CD14-positive monocyte (primary cell): ENCODE measurements at regions of chr5 and their contacts with region 1.

Region 1: GRCh38 chr5:10635257-10635866 is 71.5 kb downstream of the ANKRD33B start:
- DNase-seq: peak; percentile 93 to 97 (median 97)
- H3K4me3 ChIP-seq: peak overlapping the region in 1 of 3 experiments; percentile 38
- H3K4me3 Mint-ChIP-seq: peak overlapping the region; percentile 7 to 57
- H3K27ac ChIP-seq: peak overlapping the region; percentile 38 to 98
- H3K27ac Mint-ChIP-seq: peak overlapping the region; percentile 81 to 99 (median 87)
- H3K4me1 ChIP-seq: peaks cover 54 to 58% of the 10 kb centered on the region in 2 donors
- H3K4me1 Mint-ChIP-seq: peaks cover 57% of the 10 kb centered on the region
- H3K27me3 ChIP-seq: no peaks in the 10 kb centered on the region
- H3K27me3 Mint-ChIP-seq: peaks cover 2 to 12% (median 2%) of the 10 kb centered on the region in 3 donors
- CTCF ChIP-seq: no peak

Region 2: DNA sequence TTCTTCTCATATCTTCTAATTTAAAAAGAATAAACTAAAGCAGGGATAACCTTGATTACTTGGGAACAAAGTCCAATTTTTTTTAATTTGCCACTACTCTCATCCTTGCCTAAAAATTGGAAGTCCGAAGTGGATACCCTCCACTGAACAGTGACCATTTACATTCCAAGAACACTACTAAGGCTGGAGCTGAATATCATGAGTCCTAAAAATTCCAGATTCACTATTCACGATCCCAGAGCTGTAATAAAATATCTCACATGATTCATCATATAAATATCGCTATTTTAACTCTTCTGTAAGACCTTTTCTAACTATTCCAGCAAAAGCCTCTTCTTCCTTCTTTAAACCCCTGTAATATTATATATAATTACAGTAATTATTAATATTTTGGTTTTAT is 443.1 kb before region 1 on chr5:
- intact Hi-C with region 1: no loop called
- DNase-seq: no peak
- H3K4me3 ChIP-seq: no peak overlapping the region
- H3K4me3 Mint-ChIP-seq: no peak overlapping the region
- H3K27ac ChIP-seq: no peak overlapping the region
- H3K27ac Mint-ChIP-seq: no peak overlapping the region
- H3K4me1 ChIP-seq: no peaks in the 10 kb centered on the region
- H3K4me1 Mint-ChIP-seq: no peaks in the 10 kb centered on the region
- H3K27me3 ChIP-seq: no peaks in the 10 kb centered on the region
- H3K27me3 Mint-ChIP-seq: peaks cover 2 to 7% (median 4%) of the 10 kb centered on the region in 3 donors
- CTCF ChIP-seq: no peak

Region 3: DNA sequence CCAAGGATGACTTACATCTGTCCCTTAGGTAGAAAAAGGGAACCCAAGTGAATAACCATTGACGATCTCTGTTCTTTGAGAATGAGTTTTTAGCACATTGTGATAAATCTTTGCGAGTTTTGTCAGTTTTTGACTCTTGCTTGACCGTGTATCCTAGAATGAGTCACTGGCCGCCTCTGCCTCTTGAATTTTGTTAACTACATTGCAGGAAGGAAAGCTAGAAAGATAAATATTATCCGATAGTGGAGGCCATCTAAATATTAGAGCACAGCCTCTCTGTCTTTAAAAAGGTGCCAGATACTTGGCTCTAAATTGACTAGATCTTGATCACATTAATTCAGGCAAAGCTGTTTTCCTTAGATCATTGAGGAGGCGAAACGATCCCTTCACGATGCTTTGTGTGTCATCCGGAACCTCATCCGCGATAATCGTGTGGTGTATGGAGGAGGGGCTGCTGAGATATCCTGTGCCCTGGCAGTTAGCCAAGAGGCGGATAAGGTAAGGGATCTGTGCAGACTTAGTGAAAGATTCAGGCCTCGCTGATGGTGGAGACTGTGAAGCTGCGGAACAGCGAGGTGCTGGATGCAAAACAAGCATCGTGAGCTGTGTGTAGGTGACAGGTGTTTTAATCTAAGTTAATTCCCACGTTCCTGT is 373.1 kb before region 1 on chr5:
- intact Hi-C with region 1: loop called (anchors 5 to 10 kb)
- DNase-seq: no peak
- H3K4me3 ChIP-seq: no peak overlapping the region
- H3K4me3 Mint-ChIP-seq: no peak overlapping the region
- H3K27ac ChIP-seq: no peak overlapping the region
- H3K27ac Mint-ChIP-seq: peak overlapping the region in 5 of 7 donors; percentile 9 to 86 (median 40)
- H3K4me1 ChIP-seq: peaks cover 23 to 32% of the 10 kb centered on the region in 2 donors
- H3K4me1 Mint-ChIP-seq: peaks cover 30% of the 10 kb centered on the region
- H3K27me3 ChIP-seq: no peaks in the 10 kb centered on the region
- H3K27me3 Mint-ChIP-seq: peaks cover 0 to 3% (median 0%) of the 10 kb centered on the region in 3 donors
- CTCF ChIP-seq: no peak

Region 4: DNA sequence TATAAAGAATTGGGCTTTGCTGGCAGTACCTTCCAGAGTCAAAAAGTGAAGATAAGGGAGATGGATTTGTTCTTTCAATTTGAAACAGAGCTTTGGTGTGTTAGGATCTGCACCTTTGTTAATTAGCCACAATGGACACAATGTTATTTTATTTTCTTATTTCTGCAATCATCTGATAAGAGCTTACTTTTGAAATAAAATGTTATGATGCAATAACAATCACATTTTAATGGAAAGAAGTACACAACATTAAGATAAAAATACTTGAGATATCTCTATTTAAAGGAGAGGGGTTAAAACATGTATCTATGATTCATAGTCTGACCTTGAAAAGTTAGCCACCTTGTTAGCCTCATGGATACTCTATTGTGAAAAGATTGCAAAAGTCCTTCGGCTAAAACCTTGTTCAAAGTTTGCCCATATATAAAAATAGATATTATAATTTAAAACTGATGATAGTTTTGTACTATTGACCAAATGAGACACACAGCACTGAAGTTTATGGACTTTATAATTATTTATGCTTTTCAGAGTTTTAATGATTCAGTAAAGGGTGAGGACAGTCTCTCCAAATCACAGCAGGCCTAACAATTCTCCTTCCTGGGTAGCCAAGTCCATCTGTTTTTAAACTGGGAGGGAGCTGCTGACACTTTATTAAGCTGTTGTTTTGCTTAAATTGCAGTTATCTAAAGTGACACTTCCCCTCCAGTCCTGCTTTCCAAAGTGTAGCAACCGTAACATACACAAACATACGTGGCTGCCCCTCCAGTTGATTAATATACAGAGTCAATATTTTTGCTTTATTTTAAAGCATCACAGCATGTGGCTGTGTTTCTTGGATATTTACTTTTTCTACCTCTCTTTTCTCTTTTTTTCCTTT is 173.2 kb after region 1 on chr5:
- intact Hi-C with region 1: no loop called
- DNase-seq: no peak
- H3K4me3 ChIP-seq: no peak overlapping the region
- H3K4me3 Mint-ChIP-seq: no peak overlapping the region
- H3K27ac ChIP-seq: no peak overlapping the region
- H3K27ac Mint-ChIP-seq: peak overlapping the region in 1 of 7 donors; percentile 35
- H3K4me1 ChIP-seq: no peaks in the 10 kb centered on the region
- H3K4me1 Mint-ChIP-seq: peaks cover 4% of the 10 kb centered on the region
- H3K27me3 ChIP-seq: no peaks in the 10 kb centered on the region
- H3K27me3 Mint-ChIP-seq: peaks cover 0 to 3% (median 1%) of the 10 kb centered on the region in 3 donors
- CTCF ChIP-seq: no peak